ENCODE measurements at regions of chr5 and their contacts with region 1.

Region 1: GRCh38 chr5:134845852-134846640 is at the start of gene C5orf24:
- DNase-seq: peak; percentile 89
- total RNA-seq, gene C5orf24: 9.7 and 18.5 TPM in 2 replicates

Region 2: GRCh38 chr5:134758504-134759341 is 87.3 kb before region 1 on chr5 and contains the start of gene DDX46:
- in situ Hi-C with region 1: loop called (anchors 10 kb)
- DNase-seq: peak; percentile 89
- total RNA-seq, gene DDX46: 8.2 and 8.5 TPM in 2 replicates